ENCODE measurements at regions of chr3 and their contacts with region 1.

Region 1: GRCh38 chr3:113745273-113746068 is 578 bp downstream of the NAA50 start:
- DNase-seq: peak; percentile 95
- H3K4me3 Mint-ChIP-seq: peak overlapping the region; percentile 94
- H3K27ac Mint-ChIP-seq: peak overlapping the region; percentile 100
- H3K4me1 Mint-ChIP-seq: peaks cover 49% of the 10 kb centered on the region
- H3K27me3 Mint-ChIP-seq: no peaks in the 10 kb centered on the region
- CTCF ChIP-seq: peak; percentile 39

Region 2: DNA sequence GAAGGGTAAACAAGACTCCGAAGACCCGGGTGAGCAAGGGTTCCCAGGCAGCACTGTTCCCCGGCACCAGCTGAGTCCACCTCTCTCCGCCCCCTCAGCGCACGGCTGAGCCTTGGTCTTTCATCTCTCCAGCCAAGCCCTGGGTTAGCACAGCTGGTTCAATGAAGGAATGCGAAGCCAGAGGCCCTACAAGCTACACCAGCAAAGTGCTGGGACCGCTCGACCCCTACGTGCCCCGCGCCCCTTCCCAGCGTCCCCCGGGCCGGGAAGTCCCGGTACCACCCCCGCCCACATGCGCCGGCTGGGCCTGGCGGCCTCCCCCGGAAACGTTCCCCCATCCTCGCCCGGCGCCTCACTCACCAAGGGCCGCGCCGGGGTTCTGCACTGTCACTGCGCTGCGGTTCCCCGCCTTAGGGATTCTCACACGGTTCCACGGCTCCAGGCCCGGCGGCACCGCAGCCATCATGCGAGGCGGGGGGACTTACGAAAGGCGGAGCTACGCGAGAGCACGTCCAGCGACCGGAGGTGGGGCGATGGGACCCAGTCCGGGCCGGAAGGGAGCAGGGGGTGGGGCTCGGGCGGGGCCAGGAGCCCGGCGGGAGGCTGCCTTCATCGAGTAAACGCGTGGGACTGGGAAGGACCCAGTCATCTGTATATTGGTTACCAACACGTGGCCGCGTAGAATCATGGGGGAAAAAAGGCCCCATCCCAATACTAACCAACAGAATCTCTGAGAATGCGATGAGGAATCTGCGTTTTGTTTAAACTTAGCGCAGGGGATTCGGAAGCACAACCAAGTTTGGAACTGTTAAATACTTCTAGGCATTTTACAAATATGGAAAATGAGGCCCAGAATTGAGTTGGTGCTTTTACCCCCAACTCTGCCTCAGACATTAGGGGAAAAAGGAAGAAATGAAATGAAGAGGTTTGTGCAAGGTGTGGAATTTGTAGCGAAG is 726.0 kb before region 1 on chr3:
- CTCF ChIA-PET with region 1: no interaction called
- POLR2A ChIA-PET with region 1: interaction called, 13 read pairs
- intact Hi-C with region 1: no loop called
- DNase-seq: peak; percentile 89
- H3K4me3 Mint-ChIP-seq: peak overlapping the region; percentile 97
- H3K27ac Mint-ChIP-seq: peak overlapping the region; percentile 98
- H3K4me1 Mint-ChIP-seq: peaks cover 31% of the 10 kb centered on the region
- H3K27me3 Mint-ChIP-seq: no peaks in the 10 kb centered on the region
- CTCF ChIP-seq: no peak

Region 3: DNA sequence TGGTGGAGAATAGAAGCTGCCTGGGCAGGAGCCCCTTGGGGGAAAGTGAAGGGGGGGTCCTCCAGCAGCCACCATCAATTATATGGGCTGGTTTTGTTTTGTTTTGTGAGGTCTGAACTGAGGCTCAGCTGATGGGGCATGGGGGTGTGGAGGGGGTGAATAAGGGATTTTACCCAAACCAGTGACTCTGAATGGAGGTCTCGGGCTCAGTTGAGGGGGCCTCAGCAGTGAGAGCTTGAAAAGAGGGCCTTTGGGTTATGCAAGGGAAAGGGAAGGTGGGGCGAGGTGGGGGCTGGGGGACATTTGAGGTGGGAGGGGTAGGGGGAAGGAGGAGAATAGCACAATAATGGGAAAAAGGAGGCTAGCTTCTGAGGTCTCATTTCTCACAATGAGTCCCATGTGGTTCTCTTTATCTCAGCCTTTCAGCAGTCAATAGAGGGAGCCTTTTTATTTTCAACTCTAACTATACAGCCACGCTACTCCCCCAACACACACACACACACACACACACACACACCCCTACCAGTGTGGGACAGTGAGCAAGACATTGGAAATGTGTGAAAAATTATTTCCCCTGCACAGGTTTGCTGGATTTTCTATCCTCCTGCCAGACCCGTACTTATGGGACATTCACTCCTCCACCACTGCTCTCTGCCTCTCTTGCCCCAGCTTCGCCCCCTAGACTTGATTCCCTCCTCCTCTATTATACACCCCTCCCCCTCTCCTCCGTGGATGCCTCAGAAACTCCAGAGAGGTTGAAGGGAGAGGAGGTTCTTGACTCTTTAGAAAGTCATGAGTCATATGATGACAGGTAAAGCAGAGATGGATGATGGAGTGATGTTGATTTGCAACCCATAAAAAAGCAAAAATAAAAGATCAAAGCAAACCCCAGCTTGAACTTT is 658.7 kb before region 1 on chr3:
- CTCF ChIA-PET with region 1: no interaction called
- POLR2A ChIA-PET with region 1: no interaction called
- intact Hi-C with region 1: no loop called
- DNase-seq: no peak
- H3K4me3 Mint-ChIP-seq: no peak overlapping the region
- H3K27ac Mint-ChIP-seq: no peak overlapping the region
- H3K4me1 Mint-ChIP-seq: peaks cover 20% of the 10 kb centered on the region
- H3K27me3 Mint-ChIP-seq: peaks cover 43% of the 10 kb centered on the region
- CTCF ChIP-seq: no peak

Region 4: DNA sequence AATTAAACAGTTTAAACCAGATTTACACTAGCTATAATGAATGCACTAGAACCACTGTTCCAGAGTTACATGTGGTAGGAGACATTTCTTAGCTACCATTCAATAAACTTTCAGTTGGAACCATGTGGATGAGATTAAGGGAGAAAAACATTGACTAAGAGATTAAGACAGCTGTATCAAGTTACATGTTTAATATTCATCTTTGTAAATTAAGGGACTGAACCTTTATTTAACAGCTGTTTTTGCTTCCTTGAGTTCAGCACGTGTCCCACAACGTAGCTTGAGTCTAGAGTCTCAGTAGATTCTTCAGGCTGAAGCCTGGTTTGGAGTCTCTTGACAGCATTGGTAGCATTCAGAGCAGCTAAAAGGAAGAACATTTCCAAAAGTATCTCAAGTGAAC is 276.9 kb before region 1 on chr3:
- CTCF ChIA-PET with region 1: no interaction called
- POLR2A ChIA-PET with region 1: no interaction called
- intact Hi-C with region 1: no loop called
- DNase-seq: no peak
- H3K4me3 Mint-ChIP-seq: no peak overlapping the region
- H3K27ac Mint-ChIP-seq: no peak overlapping the region
- H3K4me1 Mint-ChIP-seq: no peaks in the 10 kb centered on the region
- H3K27me3 Mint-ChIP-seq: no peaks in the 10 kb centered on the region
- CTCF ChIP-seq: no peak

Region 5: DNA sequence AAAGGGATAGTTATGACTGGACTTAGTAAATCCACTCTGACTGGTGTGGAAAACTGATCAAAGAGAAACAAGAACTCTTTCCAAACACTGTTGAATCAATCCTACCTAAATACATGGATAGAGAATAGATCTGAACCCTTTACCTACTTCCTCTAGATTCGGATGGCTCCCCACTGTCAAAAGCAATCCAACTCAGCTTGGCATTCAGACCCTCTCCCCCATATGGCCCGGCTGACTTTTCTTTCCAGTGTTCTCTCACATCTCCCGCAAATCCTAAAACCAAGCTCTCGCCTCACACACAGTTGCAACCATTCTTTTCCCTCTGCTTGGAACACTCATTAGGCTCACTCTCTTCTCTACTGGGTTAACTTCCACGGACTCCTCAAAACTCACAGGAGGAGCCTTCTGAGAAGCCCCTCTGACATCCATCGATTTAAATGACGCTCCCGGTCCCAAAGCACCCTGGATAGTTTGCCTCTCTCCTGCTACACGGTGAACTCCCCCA is 231.2 kb before region 1 on chr3:
- CTCF ChIA-PET with region 1: interaction called, 4 read pairs
- POLR2A ChIA-PET with region 1: interaction called, 74 read pairs
- intact Hi-C with region 1: loop called (anchors 1 kb)
- DNase-seq: no peak
- H3K4me3 Mint-ChIP-seq: no peak overlapping the region
- H3K27ac Mint-ChIP-seq: no peak overlapping the region
- H3K4me1 Mint-ChIP-seq: peaks cover 5% of the 10 kb centered on the region
- H3K27me3 Mint-ChIP-seq: peaks cover 9% of the 10 kb centered on the region
- CTCF ChIP-seq: no peak

Region 6: GRCh38 chr3:113626503-113627371 is 118.7 kb before region 1 on chr3:
- CTCF ChIA-PET with region 1: interaction called, 4 read pairs
- POLR2A ChIA-PET with region 1: interaction called, 4 read pairs
- intact Hi-C with region 1: loop called (anchors 1 kb)
- DNase-seq: peak; percentile 74
- H3K4me3 Mint-ChIP-seq: no peak overlapping the region
- H3K27ac Mint-ChIP-seq: no peak overlapping the region
- H3K4me1 Mint-ChIP-seq: peaks cover 13% of the 10 kb centered on the region
- H3K27me3 Mint-ChIP-seq: no peaks in the 10 kb centered on the region
- CTCF ChIP-seq: peak; percentile 90

Region 7: DNA sequence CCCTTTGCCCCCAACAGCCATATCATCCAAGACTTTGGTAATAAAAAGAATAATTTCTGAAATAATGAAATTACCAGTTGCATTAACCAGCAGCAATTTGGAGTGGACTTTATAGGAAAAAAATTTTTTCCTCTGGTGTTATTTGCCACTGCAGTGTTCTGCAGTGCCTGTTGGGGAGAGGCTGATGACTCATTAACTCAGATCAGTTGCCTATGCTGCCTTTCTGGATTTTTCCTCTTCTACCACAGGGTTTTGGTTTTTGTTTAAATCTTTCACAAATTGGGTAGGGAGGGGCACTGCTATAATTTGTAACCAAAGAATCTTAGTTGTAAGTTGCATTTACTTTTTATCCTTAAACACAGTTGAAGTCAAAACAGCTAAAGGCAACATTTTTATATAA is 24.1 kb after region 1 on chr3:
- CTCF ChIA-PET with region 1: interaction called, 6 read pairs
- POLR2A ChIA-PET with region 1: interaction called, 12 read pairs
- intact Hi-C with region 1: no loop called
- DNase-seq: peak; percentile 36
- H3K4me3 Mint-ChIP-seq: no peak overlapping the region
- H3K27ac Mint-ChIP-seq: no peak overlapping the region
- H3K4me1 Mint-ChIP-seq: no peaks in the 10 kb centered on the region
- H3K27me3 Mint-ChIP-seq: no peaks in the 10 kb centered on the region
- CTCF ChIP-seq: no peak

Region 8: GRCh38 chr3:113802795-113803455 is 57.5 kb after region 1 on chr3:
- CTCF ChIA-PET with region 1: interaction called, 5 read pairs
- POLR2A ChIA-PET with region 1: interaction called, 11 read pairs
- intact Hi-C with region 1: no loop called
- DNase-seq: no peak
- H3K4me3 Mint-ChIP-seq: no peak overlapping the region
- H3K27ac Mint-ChIP-seq: no peak overlapping the region
- H3K4me1 Mint-ChIP-seq: no peaks in the 10 kb centered on the region
- H3K27me3 Mint-ChIP-seq: no peaks in the 10 kb centered on the region
- CTCF ChIP-seq: no peak

Region 9: DNA sequence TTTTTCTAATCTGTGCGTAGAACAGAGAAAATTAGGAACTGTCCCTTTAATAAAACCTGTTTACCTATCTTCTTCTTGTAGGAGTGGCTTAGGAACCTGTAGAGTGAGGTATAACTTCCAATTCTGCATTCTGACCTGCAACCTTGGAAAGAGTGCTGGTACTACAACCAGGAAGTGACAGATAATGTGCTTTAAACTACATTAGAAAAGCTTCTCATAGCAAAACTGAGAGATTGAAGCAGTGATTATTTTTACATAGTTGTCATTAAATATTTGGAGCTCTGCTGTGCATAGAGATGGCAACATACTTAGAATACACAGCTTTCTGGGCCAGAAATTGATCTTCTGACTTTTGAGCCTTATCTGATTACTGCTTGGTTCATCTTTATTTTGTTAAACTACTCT is 151.9 kb after region 1 on chr3:
- CTCF ChIA-PET with region 1: no interaction called
- POLR2A ChIA-PET with region 1: interaction called, 29 read pairs
- intact Hi-C with region 1: no loop called
- DNase-seq: peak; percentile 33
- H3K4me3 Mint-ChIP-seq: peak overlapping the region; percentile 64
- H3K27ac Mint-ChIP-seq: no peak overlapping the region
- H3K4me1 Mint-ChIP-seq: peaks cover 14% of the 10 kb centered on the region
- H3K27me3 Mint-ChIP-seq: no peaks in the 10 kb centered on the region
- CTCF ChIP-seq: no peak

Measured in MCF 10A (cell line).